Right ventricle myocardium inferior (tissue), 1 donor: ENCODE measurements at regions of chr15 and their contacts with region 1.

Region 1: GRCh38 chr15:75801859-75802593 is 41.2 kb upstream of the UBE2Q2 start:
- DNase-seq: peak; percentile 94
- ATAC-seq: peak; percentile 98

Region 2: DNA sequence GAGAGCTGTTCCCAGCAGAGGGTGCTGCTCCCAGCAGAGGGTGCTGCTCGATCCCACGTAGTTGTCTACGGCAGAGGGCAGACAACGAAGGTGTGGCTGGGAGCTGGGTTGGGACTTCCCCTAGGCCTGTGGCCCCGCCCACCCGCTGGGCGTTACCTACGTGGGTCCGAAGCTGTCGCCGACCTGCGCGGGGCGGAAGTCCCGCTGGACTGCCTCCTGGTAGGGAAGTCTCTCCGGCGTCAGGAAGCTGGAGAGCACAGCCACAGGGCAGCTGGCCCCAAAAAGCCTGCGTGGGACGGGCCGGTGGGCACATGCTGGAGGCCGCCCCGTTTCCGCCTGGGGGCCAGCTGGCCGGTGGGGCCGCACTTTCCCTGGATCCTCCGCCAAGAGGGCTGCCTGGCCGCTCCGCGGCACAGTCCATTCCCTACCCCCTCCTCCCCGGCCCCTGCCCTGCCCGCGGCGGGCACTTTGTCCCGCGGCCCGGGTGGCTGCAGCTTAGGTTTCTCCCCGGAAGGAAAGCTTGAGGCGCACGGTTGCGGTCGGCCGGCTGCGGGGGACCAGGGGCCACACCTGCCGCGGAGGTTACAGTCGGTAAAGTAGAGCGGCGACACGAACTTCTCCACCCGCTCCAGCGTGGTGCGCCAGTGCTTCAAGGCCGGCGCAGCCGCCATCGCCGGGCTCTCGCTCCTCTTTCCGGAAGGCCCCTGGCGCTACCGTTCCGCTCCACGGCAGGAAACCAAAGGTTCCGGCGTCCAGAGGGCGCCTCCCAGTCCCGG is 433.9 kb before region 1 on chr15 and contains the start of gene MAN2C1:
- intact Hi-C with region 1: loop called (anchors 1 kb)
- DNase-seq: peak; percentile 98
- ATAC-seq: peak; percentile 97
- total RNA-seq, gene MAN2C1: 89.2 TPM

Region 3: DNA sequence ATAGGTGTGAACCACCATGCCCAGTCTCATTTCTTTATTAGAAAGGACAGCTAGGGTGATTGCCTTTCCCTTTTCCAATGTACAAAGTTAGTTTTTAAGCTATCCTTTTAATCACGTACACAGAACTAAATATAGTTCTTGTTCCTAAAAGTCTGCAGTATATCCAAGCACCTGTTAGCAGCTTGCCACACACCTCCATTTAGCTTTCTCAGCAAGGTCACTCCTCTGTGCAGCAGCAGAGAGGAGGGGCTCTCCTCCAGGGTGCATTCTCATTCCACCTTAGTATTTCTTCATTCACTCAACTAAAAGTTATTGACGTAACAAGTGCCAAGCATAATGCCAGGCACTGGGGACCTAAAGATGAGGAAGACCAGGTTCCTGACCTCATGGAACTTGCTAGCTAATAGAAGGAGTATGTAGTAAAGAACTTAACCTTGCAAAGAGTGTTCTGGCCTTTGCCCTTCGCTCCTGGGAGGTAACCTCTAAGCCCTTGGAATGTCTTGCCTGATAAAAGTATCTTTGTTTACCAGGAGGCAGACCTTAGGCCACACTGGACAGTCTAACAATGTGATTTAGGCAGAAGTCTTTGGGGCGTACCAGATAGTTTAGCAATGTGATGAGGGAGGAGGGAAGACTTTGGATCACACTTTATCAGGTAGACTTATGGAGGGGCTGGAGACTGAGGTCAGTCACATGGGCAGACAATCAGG is 210.2 kb before region 1 on chr15:
- intact Hi-C with region 1: no loop called
- DNase-seq: no peak
- ATAC-seq: no peak

Region 4: GRCh38 chr15:75684642-75685041 is 117.4 kb before region 1 on chr15:
- intact Hi-C with region 1: loop called (anchors 5 kb)
- DNase-seq: no peak
- ATAC-seq: no peak

Region 5: DNA sequence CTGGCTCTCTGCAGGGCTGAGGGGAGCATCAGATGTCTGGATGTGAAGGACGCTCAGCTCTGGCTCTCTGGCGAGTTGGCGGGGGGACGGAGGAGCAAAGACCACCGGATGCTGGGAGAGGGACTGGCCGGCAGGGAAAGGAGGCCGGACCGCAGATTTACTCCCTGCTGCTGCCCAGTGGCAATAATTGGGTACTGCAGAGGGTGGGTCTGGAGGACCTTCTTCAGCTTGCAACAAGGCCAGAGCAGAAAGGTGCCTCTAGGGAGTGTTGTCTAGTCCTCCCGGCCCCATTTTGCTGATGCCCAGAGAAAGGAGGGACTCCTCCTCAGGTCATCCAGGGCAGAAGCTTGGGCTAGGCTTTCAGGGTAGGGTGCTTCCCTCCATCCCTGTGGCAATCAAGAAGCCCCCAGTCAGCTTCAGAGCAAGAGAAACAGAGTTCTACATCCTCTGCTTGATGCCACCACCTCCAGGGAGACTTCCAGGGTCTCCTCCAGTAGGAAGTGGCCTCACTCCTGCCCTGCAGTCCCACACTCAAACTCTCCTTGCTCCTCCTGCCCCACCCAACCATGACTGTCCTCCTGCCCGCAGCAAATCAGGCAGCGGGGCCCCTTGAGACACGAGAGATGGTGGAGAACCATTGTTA is 69.1 kb before region 1 on chr15:
- intact Hi-C with region 1: loop called (anchors 1 kb)
- DNase-seq: no peak
- ATAC-seq: peak; percentile 63

Region 6: GRCh38 chr15:76127880-76128279 is 325.9 kb after region 1 on chr15:
- intact Hi-C with region 1: no loop called
- DNase-seq: no peak
- ATAC-seq: no peak